Kidney (tissue), 22 donors: ENCODE measurements at regions of chr18 and their contacts with region 1.

Region 1: GRCh38 chr18:4119813-4120212 is 335.3 kb downstream of the DLGAP1 start:
- DNase-seq: no peak
- H3K4me3 ChIP-seq: no peak overlapping the region
- H3K27ac ChIP-seq: no peak overlapping the region
- H3K4me1 ChIP-seq: no peaks in the 10 kb centered on the region
- H3K27me3 ChIP-seq: no peaks in the 10 kb centered on the region
- CTCF ChIP-seq: no peak

Region 2: DNA sequence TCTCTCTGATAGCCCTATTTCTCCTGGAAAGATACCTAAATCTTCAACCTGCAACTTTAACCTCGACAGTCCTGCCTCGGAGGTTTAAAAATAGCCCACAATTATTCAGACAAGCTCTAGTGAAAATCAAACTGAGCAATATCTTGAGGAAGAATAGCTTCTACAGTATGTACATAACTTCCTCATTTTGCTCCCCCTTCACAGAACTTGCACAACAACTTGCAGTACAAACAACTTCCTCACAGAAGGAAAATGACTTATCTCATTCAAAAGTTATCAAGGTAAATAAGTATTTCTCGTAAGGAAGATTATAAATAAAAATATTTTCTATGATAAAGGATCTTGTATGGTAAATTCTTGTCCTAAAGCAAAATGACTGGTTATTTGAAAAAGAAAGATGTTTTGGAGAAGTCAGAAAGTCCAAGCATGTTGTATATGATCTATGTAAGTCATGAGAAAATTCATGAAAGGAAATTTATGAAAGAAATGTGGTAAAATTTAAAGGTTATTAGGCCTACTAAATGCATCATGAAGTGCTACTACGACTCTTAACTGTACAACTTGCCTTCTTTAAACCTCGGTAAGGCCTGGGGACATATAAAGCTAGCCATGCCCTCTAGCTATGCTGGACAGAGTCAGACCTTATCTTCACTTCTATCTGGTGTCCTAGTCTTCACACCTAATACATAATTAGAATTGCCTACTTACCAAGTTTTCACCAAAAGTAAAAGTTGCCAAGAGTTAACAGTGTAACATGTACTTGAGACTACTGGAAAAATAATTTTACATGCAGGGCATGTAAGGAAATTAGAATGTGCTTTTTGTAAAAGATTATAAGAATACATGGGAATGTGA is 59.2 kb before region 1 on chr18:
- intact Hi-C with region 1: no loop called
- DNase-seq: no peak
- H3K4me3 ChIP-seq: no peak overlapping the region
- H3K27ac ChIP-seq: no peak overlapping the region
- H3K4me1 ChIP-seq: peaks cover 0 to 5% (median 0%) of the 10 kb centered on the region in 3 donors
- H3K27me3 ChIP-seq: no peaks in the 10 kb centered on the region
- CTCF ChIP-seq: no peak

Region 3: DNA sequence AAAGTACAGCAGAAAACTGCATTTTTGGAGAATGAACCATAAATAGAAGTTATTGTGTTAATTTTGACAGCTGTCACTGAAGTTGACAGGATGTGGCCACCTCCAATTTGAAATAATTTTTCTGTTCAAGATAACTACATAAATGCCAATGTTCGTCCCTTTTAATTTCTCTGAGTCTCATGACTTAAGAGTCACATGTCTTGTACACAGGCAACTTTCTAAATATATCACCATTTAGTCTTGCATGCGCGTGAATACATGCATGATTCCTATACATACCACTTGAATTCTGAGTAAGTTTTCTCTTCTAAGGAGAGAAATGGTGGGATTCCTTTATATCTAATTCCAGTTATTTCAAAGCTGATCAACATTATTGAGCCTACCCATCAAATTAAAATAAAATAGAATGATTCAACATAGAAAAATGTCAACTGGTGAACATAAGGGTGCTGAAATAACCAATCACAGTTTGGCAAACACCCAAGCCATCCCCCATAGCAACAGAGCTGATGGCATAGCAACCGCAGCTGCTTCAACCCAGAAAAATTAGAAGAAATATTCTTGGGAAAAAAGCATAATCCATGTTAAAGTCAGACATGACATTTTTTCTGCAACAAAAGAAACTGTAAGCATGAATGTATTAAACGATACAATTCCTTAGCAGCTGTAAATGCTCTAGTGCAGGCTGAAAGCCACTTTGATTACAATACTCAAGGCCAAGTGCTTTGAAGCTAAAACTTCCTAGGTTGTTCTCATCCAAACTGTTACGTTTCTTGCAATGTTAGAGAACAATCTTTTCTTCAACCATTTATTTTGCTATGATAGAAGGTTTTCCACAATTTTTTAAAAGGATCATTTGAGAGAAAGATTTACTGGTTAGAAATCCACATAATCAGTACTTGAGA is 52.6 kb after region 1 on chr18:
- intact Hi-C with region 1: loop called (anchors 10 kb)
- DNase-seq: peak in 1 of 5 donors; percentile 3
- H3K4me3 ChIP-seq: no peak overlapping the region
- H3K27ac ChIP-seq: no peak overlapping the region
- H3K4me1 ChIP-seq: no peaks in the 10 kb centered on the region
- H3K27me3 ChIP-seq: no peaks in the 10 kb centered on the region
- CTCF ChIP-seq: no peak